ENCODE measurements at regions of chr10 and their contacts with region 1.

Region 1: GRCh38 chr10:92965314-92965713 is 95.3 kb upstream of the CYP26C1 start:
- DNase-seq: no peak
- ATAC-seq: 0 out of 3 replicates have a peak, but pooled peaks have one; percentile 33
- H3K4me3 ChIP-seq: no peak overlapping the region
- H3K27ac ChIP-seq: no peak overlapping the region
- H3K4me1 ChIP-seq: no peaks in the 10 kb centered on the region
- H3K27me3 ChIP-seq: no peaks in the 10 kb centered on the region
- CTCF ChIP-seq: peak; percentile 32 to 59 (median 38); a peak in 5 of 6 replicates
- EP300 ChIP-seq: no peak
- POLR2A ChIP-seq: no peak
- RAD21 ChIP-seq: peak; percentile 36; the same call in 1 of the 2 replicates

Region 2: DNA sequence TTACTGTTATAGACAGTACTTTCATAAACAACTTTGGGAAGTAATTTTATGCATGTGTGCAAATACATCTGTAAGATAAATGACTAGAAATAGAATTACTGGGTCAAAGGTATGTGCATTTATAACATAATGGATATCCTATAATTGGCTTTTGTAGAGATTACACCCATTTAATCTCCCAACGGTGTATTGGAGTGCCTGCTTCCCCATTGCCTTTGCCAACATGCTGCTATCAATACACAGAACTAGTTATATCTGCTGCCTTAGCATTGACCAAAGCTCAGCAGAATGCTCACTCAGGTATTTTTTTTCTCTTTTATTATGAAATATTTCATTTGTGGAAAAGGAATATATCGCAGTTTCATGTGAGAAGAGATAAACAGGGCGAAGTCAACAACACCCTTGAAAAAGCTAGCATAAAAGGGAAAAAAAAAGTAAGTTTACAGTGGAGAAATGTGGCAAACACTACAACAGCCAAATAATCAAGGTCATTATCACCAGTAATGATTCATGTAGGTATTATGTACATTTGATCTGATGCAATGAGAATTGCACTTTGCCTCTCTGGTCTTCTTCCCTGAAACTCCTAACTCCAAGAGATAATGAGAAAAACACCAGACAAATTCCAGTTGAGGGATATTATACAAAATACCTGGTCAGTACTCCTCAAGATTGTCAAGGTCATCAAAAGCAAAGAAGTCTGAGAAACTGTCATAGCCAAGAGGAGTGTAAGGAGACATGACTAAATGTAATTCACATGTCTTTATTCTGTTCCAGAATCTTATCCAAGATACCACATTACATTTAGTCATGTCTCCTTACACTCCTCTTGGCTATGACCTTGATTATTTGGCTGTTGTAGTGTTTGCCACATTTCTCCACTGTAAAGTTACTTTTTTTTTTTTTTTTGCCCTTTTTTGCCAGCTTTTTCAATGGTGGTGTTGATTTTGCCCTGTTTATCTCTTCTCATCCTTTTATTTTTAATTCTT is 637.6 kb before region 1 on chr10:
- CTCF ChIA-PET with region 1: no interaction called
- POLR2A ChIA-PET with region 1: no interaction called
- RAD21 ChIA-PET with region 1: no interaction called
- SMC1A ChIA-PET with region 1: no interaction called
- in situ Hi-C with region 1: no loop called
- intact Hi-C with region 1: no loop called
- DNase-seq: no peak
- ATAC-seq: no peak
- H3K4me3 ChIP-seq: no peak overlapping the region
- H3K27ac ChIP-seq: no peak overlapping the region
- H3K4me1 ChIP-seq: no peaks in the 10 kb centered on the region
- H3K27me3 ChIP-seq: no peaks in the 10 kb centered on the region
- CTCF ChIP-seq: no peak
- EP300 ChIP-seq: no peak
- POLR2A ChIP-seq: no peak
- RAD21 ChIP-seq: no peak

Region 3: DNA sequence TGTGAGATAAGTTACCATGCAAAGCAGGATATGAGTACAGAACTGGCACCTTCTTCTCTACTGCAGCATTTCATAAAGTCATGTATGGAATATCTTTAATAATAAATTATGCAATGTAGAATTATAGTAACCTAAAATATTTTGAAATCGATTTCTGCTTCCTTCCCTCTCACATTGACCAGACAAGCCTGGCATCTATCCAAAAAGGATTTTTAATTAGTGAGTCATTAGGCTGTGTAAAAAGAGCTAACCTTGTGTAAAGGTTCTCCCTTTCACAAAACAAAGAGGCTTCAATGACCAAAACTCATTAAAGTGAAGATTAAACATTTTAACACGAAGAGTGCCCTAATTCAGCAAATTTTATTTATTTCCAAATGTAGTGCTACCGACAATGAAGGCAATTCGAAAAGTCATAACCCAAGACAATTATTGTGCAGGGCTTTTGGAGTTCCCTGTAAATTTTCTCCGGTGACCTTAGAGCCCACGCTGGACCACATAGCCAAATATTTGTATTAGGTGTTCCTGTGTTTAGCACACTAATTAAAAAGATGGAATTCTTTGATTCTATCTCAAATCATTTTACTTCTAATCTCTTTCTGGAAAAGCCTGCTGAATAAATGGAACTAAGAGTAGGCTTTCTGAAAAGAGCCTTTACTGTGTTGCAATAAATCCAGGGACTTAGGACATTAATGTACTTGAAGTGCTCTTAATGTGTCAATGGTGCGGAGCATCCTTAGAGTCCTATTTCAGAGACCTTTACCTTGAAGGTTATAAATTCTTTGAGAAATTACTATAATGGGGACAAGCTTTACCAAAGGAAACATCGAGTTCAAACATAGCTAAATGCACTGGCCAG is 165.5 kb before region 1 on chr10:
- CTCF ChIA-PET with region 1: no interaction called
- POLR2A ChIA-PET with region 1: no interaction called
- RAD21 ChIA-PET with region 1: no interaction called
- SMC1A ChIA-PET with region 1: no interaction called
- in situ Hi-C with region 1: no loop called
- intact Hi-C with region 1: no loop called
- DNase-seq: no peak
- ATAC-seq: no peak
- H3K4me3 ChIP-seq: no peak overlapping the region
- H3K27ac ChIP-seq: no peak overlapping the region
- H3K4me1 ChIP-seq: no peaks in the 10 kb centered on the region
- H3K27me3 ChIP-seq: no peaks in the 10 kb centered on the region; a peak in 3 of 4 replicates
- CTCF ChIP-seq: no peak
- EP300 ChIP-seq: no peak
- POLR2A ChIP-seq: no peak
- RAD21 ChIP-seq: no peak

Region 4: GRCh38 chr10:92938841-92939240 is 26.5 kb before region 1 on chr10:
- CTCF ChIA-PET with region 1: interaction called, 10 read pairs
- POLR2A ChIA-PET with region 1: no interaction called
- RAD21 ChIA-PET with region 1: no interaction called
- SMC1A ChIA-PET with region 1: interaction called, 4 read pairs
- in situ Hi-C with region 1: no loop called
- intact Hi-C with region 1: no loop called
- DNase-seq: no peak
- ATAC-seq: peak; percentile 77
- H3K4me3 ChIP-seq: no peak overlapping the region
- H3K27ac ChIP-seq: no peak overlapping the region
- H3K4me1 ChIP-seq: 0 out of 2 replicates have a peak, but pooled peaks cover 2% of the 10 kb centered on the region
- H3K27me3 ChIP-seq: no peaks in the 10 kb centered on the region
- CTCF ChIP-seq: no peak
- EP300 ChIP-seq: no peak
- POLR2A ChIP-seq: no peak
- RAD21 ChIP-seq: no peak

Region 5: DNA sequence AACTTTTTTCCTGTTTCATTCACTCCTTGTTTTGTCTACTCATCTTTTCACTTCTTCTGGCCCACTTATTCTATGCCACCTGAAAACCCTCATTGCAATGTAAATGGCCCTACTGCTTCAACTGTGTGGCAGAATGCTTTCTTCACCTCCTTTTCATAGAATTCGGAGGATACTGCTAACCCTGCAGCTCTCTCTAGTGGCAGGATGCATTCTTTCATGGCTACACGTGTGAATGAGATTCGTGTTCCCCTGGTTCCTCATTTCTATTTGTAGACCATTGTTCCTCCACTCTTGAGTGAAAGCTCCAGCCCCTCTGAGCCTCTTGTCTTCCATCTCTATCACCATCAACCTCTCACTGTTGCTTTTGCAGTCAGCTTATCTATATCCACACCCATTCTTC is 74.4 kb after region 1 on chr10:
- CTCF ChIA-PET with region 1: interaction called, 4 read pairs
- POLR2A ChIA-PET with region 1: no interaction called
- RAD21 ChIA-PET with region 1: interaction called, 4 read pairs
- SMC1A ChIA-PET with region 1: interaction called, 4 read pairs
- in situ Hi-C with region 1: no loop called
- intact Hi-C with region 1: loop called (anchors 5 kb)
- DNase-seq: peak; percentile 16
- ATAC-seq: peak; percentile 79
- H3K4me3 ChIP-seq: no peak overlapping the region
- H3K27ac ChIP-seq: no peak overlapping the region
- H3K4me1 ChIP-seq: no peaks in the 10 kb centered on the region
- H3K27me3 ChIP-seq: no peaks in the 10 kb centered on the region
- CTCF ChIP-seq: peak; percentile 53 to 69 (median 59)
- EP300 ChIP-seq: no peak
- POLR2A ChIP-seq: no peak
- RAD21 ChIP-seq: peak; percentile 80

Region 6: GRCh38 chr10:93115661-93116383 is 150.5 kb after region 1 on chr10:
- CTCF ChIA-PET with region 1: interaction called, 10 read pairs
- POLR2A ChIA-PET with region 1: no interaction called
- RAD21 ChIA-PET with region 1: no interaction called
- SMC1A ChIA-PET with region 1: interaction called, 4 read pairs
- in situ Hi-C with region 1: no loop called
- intact Hi-C with region 1: no loop called
- DNase-seq: peak; percentile 32
- ATAC-seq: peak; percentile 96
- H3K4me3 ChIP-seq: no peak overlapping the region
- H3K27ac ChIP-seq: no peak overlapping the region
- H3K4me1 ChIP-seq: peaks cover 8% of the 10 kb centered on the region; the same call in 1 of the 2 replicates
- H3K27me3 ChIP-seq: no peaks in the 10 kb centered on the region
- CTCF ChIP-seq: peak; percentile 61 to 72 (median 62)
- EP300 ChIP-seq: no peak
- POLR2A ChIP-seq: no peak
- RAD21 ChIP-seq: peak; percentile 83

Region 7: GRCh38 chr10:93160829-93161228 is 195.5 kb after region 1 on chr10:
- CTCF ChIA-PET with region 1: no interaction called
- POLR2A ChIA-PET with region 1: no interaction called
- RAD21 ChIA-PET with region 1: no interaction called
- SMC1A ChIA-PET with region 1: no interaction called
- in situ Hi-C with region 1: no loop called
- intact Hi-C with region 1: no loop called
- DNase-seq: no peak
- ATAC-seq: no peak
- H3K4me3 ChIP-seq: no peak overlapping the region
- H3K27ac ChIP-seq: no peak overlapping the region
- H3K4me1 ChIP-seq: no peaks in the 10 kb centered on the region
- H3K27me3 ChIP-seq: no peaks in the 10 kb centered on the region
- CTCF ChIP-seq: no peak
- EP300 ChIP-seq: no peak
- POLR2A ChIP-seq: no peak
- RAD21 ChIP-seq: no peak

Region 8: GRCh38 chr10:93199191-93199751 is 234.0 kb after region 1 on chr10:
- CTCF ChIA-PET with region 1: no interaction called
- POLR2A ChIA-PET with region 1: no interaction called
- RAD21 ChIA-PET with region 1: no interaction called
- SMC1A ChIA-PET with region 1: no interaction called
- in situ Hi-C with region 1: no loop called
- intact Hi-C with region 1: no loop called
- DNase-seq: no peak
- ATAC-seq: peak; percentile 35; the same call in 1 of the 3 replicates
- H3K4me3 ChIP-seq: peak overlapping the region; percentile 43; the same call in 1 of the 2 replicates
- H3K27ac ChIP-seq: no peak overlapping the region
- H3K4me1 ChIP-seq: peaks cover 7% of the 10 kb centered on the region
- H3K27me3 ChIP-seq: no peaks in the 10 kb centered on the region
- CTCF ChIP-seq: no peak
- EP300 ChIP-seq: no peak
- POLR2A ChIP-seq: no peak
- RAD21 ChIP-seq: no peak